ENCODE measurements at regions of chr18 and their contacts with region 1.

Region 1: DNA sequence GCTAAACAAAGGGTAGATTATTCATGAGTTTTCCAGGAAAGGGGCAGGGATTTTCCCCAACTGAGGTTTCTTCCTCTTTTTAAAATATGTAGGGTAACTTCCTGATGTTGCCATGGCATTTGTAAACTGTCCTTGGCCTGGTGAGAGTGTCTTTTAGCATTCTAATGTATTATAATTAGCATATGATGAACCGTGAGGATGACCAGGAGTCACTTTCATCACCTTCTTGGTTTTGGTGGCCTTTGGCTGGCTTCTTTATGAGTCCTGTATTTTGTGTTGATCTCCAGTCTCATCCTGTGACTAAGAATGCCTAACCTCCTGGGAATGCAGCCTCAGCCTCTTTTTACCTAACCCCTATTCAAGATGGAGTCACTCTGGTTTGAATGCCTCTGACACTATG is 391.0 kb upstream of the LINC00305 start:
- DNase-seq: no peak
- H3K4me3 ChIP-seq: no peak overlapping the region
- H3K27ac ChIP-seq: no peak overlapping the region
- H3K4me1 ChIP-seq: no peaks in the 10 kb centered on the region
- H3K27me3 ChIP-seq: no peaks in the 10 kb centered on the region
- CTCF ChIP-seq: no peak
- EP300 ChIP-seq: no peak
- POLR2A ChIP-seq: no peak

Region 2: GRCh38 chr18:64119916-64120315 is 419.9 kb before region 1 on chr18:
- in situ Hi-C with region 1: no loop called
- intact Hi-C with region 1: no loop called
- DNase-seq: no peak
- H3K4me3 ChIP-seq: no peak overlapping the region
- H3K27ac ChIP-seq: no peak overlapping the region
- H3K4me1 ChIP-seq: no peaks in the 10 kb centered on the region
- H3K27me3 ChIP-seq: no peaks in the 10 kb centered on the region
- CTCF ChIP-seq: no peak
- EP300 ChIP-seq: no peak
- POLR2A ChIP-seq: no peak

Region 3: DNA sequence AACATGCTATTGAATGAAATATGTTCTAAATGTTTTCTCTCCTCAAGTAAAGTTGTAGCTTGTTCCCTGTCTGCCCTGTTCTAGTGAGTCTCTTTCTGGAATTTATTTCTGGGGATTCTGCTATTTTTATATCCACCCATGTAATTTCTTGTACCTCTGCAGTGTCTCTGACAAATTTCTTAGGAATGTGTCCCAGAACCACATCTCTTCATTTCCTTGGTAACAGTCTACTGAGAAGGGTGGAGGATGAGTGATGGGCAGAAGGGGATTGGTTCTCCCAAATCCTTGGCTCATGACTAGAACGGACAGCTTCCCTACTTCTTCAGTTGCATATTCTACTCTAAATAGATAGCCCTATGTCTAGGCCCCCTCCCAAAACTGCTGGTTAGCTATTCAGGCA is 99.7 kb after region 1 on chr18:
- in situ Hi-C with region 1: loop called in 1 of 4 experiments (anchors 25 kb)
- intact Hi-C with region 1: no loop called
- DNase-seq: no peak
- H3K4me3 ChIP-seq: no peak overlapping the region
- H3K27ac ChIP-seq: no peak overlapping the region
- H3K4me1 ChIP-seq: no peaks in the 10 kb centered on the region
- H3K27me3 ChIP-seq: no peaks in the 10 kb centered on the region
- CTCF ChIP-seq: no peak
- EP300 ChIP-seq: no peak
- POLR2A ChIP-seq: no peak

Region 4: DNA sequence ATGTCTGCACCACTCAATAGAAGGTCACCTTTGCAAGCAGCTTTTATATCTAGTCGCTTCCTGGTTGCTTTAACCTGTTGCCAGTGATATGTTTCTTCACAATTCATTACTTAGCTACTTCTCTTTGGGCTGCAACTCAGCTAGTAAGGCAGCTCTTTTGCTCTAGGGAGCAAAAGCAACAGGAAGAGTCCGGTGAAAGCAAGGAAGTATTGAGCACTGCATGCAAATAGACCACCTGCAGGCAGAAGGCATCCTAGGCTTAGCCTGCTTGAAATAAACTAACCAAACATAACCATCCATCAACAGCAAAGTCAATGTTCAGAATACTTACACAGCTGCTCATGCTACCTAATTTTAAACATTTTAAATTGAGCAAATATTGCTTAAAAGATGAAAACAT is 138.2 kb after region 1 on chr18:
- in situ Hi-C with region 1: no loop called
- intact Hi-C with region 1: no loop called
- DNase-seq: no peak
- H3K4me3 ChIP-seq: no peak overlapping the region
- H3K27ac ChIP-seq: no peak overlapping the region
- H3K4me1 ChIP-seq: no peaks in the 10 kb centered on the region
- H3K27me3 ChIP-seq: no peaks in the 10 kb centered on the region
- CTCF ChIP-seq: no peak
- EP300 ChIP-seq: no peak
- POLR2A ChIP-seq: no peak

Measured in transverse colon (tissue), 4 donors.